AG04449 (cell line): ENCODE measurements at regions of chr7 and their contacts with region 1.

Region 1: DNA sequence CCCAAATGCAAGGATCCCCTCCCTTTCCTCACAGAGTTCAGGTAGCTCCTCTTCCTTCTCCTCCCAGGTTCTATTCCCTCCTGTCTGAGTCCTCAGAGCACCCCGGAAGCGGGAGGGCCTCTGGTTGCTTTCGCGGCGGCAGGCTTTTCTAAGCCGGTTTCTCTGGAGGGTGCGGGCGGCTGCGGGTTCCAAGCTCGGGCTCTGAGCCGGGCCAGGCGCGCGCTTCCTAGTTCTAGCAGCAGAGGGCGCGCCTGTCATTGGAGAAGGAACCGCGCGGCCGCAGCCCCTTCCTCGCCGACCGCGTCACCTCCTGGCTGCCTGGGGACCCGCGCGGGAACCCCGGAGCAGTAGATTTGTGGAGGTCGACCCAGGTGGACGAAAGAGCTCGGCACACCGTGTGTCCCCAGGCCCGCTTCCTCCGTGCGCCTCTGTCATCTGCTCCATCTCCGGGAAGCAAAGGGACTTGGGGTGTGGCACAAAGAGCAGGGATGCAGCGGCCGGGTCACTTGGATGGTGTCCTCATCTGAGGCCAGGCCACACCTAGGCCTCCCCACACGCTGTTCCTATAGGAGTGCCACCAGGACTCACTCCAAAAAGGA is 389.0 kb upstream of the PODXL start:
- DNase-seq: no peak
- H3K4me3 ChIP-seq: peak overlapping the region; percentile 32
- CTCF ChIP-seq: peak; percentile 93

Region 2: DNA sequence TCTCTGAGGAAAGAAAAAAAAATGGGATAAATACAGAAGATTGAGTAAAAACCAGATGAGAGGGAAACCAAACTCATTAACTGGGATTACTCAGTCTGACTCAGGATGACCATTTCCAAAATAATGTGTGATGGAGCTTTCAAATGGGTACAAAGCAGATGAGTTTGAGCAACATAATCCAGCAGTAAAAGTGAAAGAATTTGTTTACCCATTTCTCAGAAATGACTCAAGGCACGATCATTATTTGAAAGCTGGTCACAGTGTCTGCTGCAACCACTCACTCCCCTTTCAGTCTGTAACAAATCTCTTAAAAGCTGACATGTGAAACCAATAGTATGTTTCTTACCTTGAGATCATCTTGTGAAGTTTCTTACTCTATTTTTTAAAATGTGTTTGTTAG is 1106.7 kb before region 1 on chr7:
- CTCF ChIA-PET with region 1: no interaction called
- POLR2A ChIA-PET with region 1: no interaction called
- DNase-seq: peak; percentile 90
- H3K4me3 ChIP-seq: no peak overlapping the region
- CTCF ChIP-seq: no peak

Region 3: GRCh38 chr7:131688738-131689661 is 256.4 kb before region 1 on chr7:
- CTCF ChIA-PET with region 1: interaction called, 12 read pairs
- POLR2A ChIA-PET with region 1: no interaction called
- DNase-seq: no peak
- H3K4me3 ChIP-seq: no peak overlapping the region
- CTCF ChIP-seq: peak; percentile 92

Region 4: DNA sequence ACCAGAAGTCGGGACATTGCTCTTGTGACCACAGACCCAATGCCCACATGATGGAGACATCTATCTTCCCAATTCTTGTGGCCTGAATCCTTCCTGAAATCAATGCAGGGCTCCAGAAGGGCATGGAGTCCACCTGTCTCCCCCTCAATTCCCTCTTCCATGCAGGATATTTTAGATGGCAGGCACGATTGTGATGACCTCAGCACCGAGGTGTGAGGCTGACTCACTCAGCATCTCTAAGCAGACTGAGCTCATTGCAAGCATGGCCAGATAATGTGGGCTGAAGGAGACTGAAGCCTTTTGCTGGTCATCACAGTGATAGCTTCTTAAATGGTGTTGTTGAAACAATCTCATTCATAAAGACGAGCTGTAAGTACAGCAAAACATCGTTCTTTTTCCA is 14.0 kb before region 1 on chr7:
- CTCF ChIA-PET with region 1: interaction called, 13 read pairs
- POLR2A ChIA-PET with region 1: no interaction called
- DNase-seq: no peak
- H3K4me3 ChIP-seq: no peak overlapping the region
- CTCF ChIP-seq: no peak

Region 5: DNA sequence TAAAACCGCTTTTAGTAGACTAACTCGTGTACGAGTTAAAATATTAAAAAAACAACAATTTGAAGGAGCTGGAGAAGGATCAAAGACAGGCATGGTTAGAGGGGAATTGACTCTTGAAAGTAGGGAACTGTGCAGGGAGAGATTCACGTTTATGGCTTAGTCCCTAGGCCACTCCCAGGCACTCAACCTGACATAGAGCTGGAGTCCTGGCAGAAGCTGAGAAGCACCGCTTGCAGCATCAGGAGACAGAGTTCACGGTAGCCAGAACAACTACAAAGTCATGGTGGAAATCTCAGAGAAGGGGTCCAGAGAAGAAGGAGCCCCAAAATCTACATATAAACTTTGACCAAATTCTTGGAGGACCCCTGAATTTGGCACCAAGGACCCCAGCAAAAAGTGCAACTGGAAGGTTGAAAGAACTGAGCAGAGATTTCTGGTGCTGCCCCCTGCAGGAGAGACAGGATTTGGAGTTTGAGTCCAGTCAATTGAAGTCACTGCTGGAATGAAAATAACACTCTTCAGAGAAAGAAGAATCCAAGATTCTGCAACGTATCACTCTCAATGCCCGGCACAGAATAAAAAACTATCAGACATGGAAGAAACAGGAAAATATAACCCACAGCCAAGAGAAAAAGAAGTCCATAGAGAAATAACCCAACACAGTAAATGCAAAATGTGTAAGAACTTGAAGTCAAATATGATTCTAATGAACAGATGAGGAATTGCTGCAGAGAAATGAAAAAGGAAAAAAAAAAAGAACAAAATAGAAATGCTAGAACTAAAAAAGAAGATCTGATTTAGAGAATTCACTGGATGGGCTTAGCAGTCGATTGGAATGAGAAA is 104.3 kb after region 1 on chr7:
- CTCF ChIA-PET with region 1: interaction called, 13 read pairs
- POLR2A ChIA-PET with region 1: no interaction called
- DNase-seq: no peak
- H3K4me3 ChIP-seq: no peak overlapping the region
- CTCF ChIP-seq: peak; percentile 52

Region 6: GRCh38 chr7:132580717-132581285 is 635.4 kb after region 1 on chr7:
- CTCF ChIA-PET with region 1: interaction called, 30 read pairs
- POLR2A ChIA-PET with region 1: no interaction called
- DNase-seq: peak; percentile 21
- H3K4me3 ChIP-seq: no peak overlapping the region
- CTCF ChIP-seq: peak; percentile 81